Activated T-helper 1 cell treated with anti-CD3 and anti-CD28 coated beads, Interleukin-12 subunit alpha, Interleukin-12 subunit beta, Interleukin-2, Interleukin-4 antibody, amounts not matched to agents 30 ng/mL and 10 ng/mL and 1 ng/mL, durations not matched to agents 14 hours and 24 hours and 36 hours (primary cell): ENCODE measurements at regions of chr1 and their contacts with region 1.

Region 1: GRCh38 chr1:71093938-71094337 is 13.1 kb upstream of the ZRANB2 start:
- DNase-seq: no peak
- H3K4me3 Mint-ChIP-seq: no peak overlapping the region
- H3K27ac Mint-ChIP-seq: no peak overlapping the region
- H3K4me1 Mint-ChIP-seq: no peaks in the 10 kb centered on the region
- H3K27me3 Mint-ChIP-seq: peaks cover 8% of the 10 kb centered on the region

Region 2: GRCh38 chr1:71521655-71522264 is 427.8 kb after region 1 on chr1:
- intact Hi-C with region 1: loop called (anchors 10 kb)
- DNase-seq: no peak
- H3K4me3 Mint-ChIP-seq: no peak overlapping the region
- H3K27ac Mint-ChIP-seq: no peak overlapping the region
- H3K4me1 Mint-ChIP-seq: no peaks in the 10 kb centered on the region
- H3K27me3 Mint-ChIP-seq: no peaks in the 10 kb centered on the region